Stomach (tissue), 19 donors: ENCODE measurements at regions of chr6 and their contacts with region 1.

Region 1: GRCh38 chr6:33008944-33009861 is at the start of gene HLA-DOA:
- DNase-seq: peak in 1 of 2 donors; percentile 72
- H3K4me3 ChIP-seq: peak within 1 kb of the TSS; percentile 16 to 27 (median 22)
- H3K27ac ChIP-seq: peak within 1 kb of the TSS in 1 of 5 donors; percentile 5
- H3K4me1 ChIP-seq: peaks cover 0 to 9% (median 7%) of the 10 kb centered on the region in 4 donors
- H3K27me3 ChIP-seq: peaks cover 0 to 45% (median 9%) of the 10 kb centered on the region in 3 donors
- CTCF ChIP-seq: no peak
- EP300 ChIP-seq: no peak
- POLR2A ChIP-seq: no peak
- total RNA-seq, gene HLA-DOA: 0.45 to 3.9 (median 1.9) TPM in 4 of 5 donors, not detected in the other

Region 2: DNA sequence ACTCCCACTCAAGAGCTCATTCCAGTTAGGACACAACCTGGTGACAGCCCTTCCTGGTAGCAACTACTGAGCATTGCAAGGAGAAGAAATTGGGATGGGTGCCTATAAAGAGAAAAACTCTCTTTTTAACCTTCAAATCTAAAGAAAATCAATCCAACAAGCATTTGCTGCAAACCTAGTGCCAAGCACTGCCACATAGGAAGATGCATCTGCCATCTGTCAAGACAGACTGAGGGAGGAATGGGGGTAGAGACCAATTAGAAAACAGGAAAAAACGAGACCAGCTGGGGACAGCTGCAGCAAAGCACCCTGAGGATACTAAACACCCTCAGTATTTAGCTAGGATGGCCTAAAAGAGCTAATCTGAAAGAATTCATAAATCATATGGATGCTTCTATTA is 96.3 kb before region 1 on chr6:
- intact Hi-C with region 1: no loop called
- DNase-seq: no peak
- H3K4me3 ChIP-seq: no peak overlapping the region
- H3K27ac ChIP-seq: no peak overlapping the region
- H3K4me1 ChIP-seq: no peaks in the 10 kb centered on the region
- H3K27me3 ChIP-seq: peaks cover 0 to 29% (median 0%) of the 10 kb centered on the region in 3 donors
- CTCF ChIP-seq: no peak
- EP300 ChIP-seq: no peak
- POLR2A ChIP-seq: no peak

Region 3: GRCh38 chr6:32940656-32941213 is 68.5 kb before region 1 on chr6 and contains the start of gene HLA-DMB:
- intact Hi-C with region 1: no loop called
- DNase-seq: peak; percentile 67 to 92
- H3K4me3 ChIP-seq: peak within 1 kb of the TSS; percentile 28 to 56 (median 48)
- H3K27ac ChIP-seq: peak within 1 kb of the TSS; percentile 71 to 90 (median 72)
- H3K4me1 ChIP-seq: peaks cover 0 to 33% (median 16%) of the 10 kb centered on the region in 4 donors
- H3K27me3 ChIP-seq: no peaks in the 10 kb centered on the region
- CTCF ChIP-seq: no peak
- EP300 ChIP-seq: no peak
- POLR2A ChIP-seq: no peak
- total RNA-seq, gene HLA-DMB: 7.6 to 27.1 (median 13.4) TPM in 4 of 5 donors, not detected in the other

Region 4: DNA sequence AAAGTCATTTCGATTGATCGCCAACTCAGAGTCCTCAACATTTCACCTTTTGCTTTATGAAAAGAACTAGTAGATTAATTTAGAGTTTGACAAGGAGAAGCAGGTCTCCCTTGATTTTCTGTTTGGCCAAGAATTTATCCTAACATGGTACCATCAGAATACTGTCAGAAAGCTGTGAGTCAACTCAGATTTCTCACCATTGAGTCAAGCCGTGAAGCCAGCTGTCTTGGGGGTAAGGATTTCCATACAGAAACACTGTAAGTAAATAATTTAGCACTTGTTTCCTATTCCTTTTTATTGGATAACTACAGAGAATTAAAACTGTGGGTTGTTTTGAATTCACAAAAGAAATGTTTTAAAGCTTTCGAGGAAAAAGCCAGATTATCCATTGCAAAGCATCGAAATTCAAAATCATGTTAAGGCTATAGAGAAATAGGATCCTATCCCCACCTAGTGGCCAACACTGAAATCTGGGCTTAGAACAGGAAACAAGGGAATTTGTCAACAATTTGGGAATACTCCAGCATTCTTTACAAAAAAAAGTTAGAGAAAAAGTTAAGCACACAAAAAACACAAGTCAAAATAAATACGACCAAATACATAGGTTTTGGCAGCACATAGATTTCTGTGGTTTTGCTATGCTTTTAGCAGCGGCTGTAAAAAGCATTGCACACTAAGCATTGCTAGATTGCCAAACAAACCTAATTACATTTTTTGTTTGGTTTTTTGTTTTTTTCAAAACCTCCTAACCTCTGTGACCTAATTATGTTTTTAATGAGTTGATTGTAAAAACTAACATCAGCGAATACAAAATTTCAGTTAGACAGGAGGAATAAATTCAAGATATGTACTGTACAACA is 138.8 kb after region 1 on chr6:
- intact Hi-C with region 1: loop called (anchors 10 kb)
- DNase-seq: peak in 1 of 2 donors; percentile 76
- H3K4me3 ChIP-seq: no peak overlapping the region
- H3K27ac ChIP-seq: no peak overlapping the region
- H3K4me1 ChIP-seq: peaks cover 0 to 4% (median 0%) of the 10 kb centered on the region in 4 donors
- H3K27me3 ChIP-seq: peaks cover 0 to 21% (median 7%) of the 10 kb centered on the region in 3 donors
- CTCF ChIP-seq: peak in 5 of 7 experiments; percentile 63 to 76 (median 65)
- EP300 ChIP-seq: no peak
- POLR2A ChIP-seq: no peak

Region 5: DNA sequence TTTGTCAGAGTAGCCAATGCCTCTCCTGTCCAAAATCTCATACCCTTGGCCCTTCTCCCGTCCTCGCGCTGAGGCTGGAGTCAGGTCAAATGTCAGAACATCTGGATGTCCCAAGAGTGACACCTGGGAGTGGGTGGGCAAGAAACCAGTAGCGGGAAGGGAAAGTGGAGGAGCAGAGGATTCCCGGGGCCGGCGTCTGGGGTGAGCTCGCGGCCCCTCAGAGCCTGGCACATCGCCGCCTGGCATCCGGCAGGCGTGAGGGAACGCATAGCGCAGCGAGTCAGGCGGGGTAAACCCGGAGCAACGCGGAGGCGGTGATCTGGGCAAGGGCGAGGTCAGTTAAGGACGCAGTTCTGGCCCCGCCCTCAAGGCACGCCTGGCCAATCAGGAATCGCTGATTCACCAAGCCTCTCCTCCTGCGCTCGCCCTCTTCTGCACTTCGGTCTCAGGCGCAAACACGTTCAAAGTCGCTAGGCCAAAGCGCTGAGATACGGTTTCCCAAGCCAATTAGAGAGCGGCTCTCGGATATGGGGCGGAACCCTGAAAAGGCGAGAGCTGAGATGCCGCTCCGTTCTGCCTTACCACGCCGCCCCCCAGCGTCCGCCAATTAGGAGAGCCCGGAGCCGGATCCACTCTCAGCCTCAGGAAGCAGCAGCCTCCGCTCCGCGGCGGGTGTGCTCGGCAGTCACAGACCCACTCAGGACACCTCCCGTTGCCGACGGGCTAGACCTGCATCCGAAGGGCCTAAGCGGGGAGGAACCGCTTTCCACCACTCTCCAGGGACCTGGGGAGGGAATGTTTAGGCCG is 239.9 kb after region 1 on chr6:
- intact Hi-C with region 1: loop called (anchors 10 kb)
- DNase-seq: peak; percentile 98 to 99
- H3K4me3 ChIP-seq: peak overlapping the region; percentile 45 to 61 (median 52)
- H3K27ac ChIP-seq: peak overlapping the region; percentile 90 to 97 (median 95)
- H3K4me1 ChIP-seq: peaks cover 22 to 40% (median 28%) of the 10 kb centered on the region in 4 donors
- H3K27me3 ChIP-seq: no peaks in the 10 kb centered on the region
- CTCF ChIP-seq: no peak
- EP300 ChIP-seq: no peak
- POLR2A ChIP-seq: peak in 2 of 4 donors; percentile 16 to 90